A549 (cell line): ENCODE measurements at regions of chr10 and their contacts with region 1.

Region 1: GRCh38 chr10:6202684-6203330 is at the start of gene PFKFB3:
- DNase-seq: peak; percentile 91 to 97
- ATAC-seq: peak; percentile 71 to 78
- H3K4me3 ChIP-seq: peak within 1 kb of the TSS; percentile 70
- H3K27ac ChIP-seq: peak within 1 kb of the TSS; percentile 85 to 97
- H3K4me1 ChIP-seq: peaks cover 10% of the 10 kb centered on the region; the same call in 2 of the 3 replicates
- CTCF ChIP-seq: peak; percentile 92
- EP300 ChIP-seq: peak in 1 of 2 experiments; percentile 41; a peak in 1 of 5 replicates
- POLR2A ChIP-seq: peak; percentile 100
- RAD21 ChIP-seq: peak; percentile 77 to 96
- polyA plus RNA-seq, gene PFKFB3: 139 and 151 TPM in 2 replicates

Region 2: GRCh38 chr10:6044751-6045313 is 158.0 kb before region 1 on chr10:
- CTCF ChIA-PET with region 1: no interaction called
- POLR2A ChIA-PET with region 1: no interaction called
- DNase-seq: no peak
- ATAC-seq: no peak
- H3K4me3 ChIP-seq: no peak overlapping the region
- H3K27ac ChIP-seq: no peak overlapping the region
- H3K4me1 ChIP-seq: no peaks in the 10 kb centered on the region
- CTCF ChIP-seq: no peak
- EP300 ChIP-seq: no peak
- POLR2A ChIP-seq: no peak
- RAD21 ChIP-seq: no peak

Region 3: DNA sequence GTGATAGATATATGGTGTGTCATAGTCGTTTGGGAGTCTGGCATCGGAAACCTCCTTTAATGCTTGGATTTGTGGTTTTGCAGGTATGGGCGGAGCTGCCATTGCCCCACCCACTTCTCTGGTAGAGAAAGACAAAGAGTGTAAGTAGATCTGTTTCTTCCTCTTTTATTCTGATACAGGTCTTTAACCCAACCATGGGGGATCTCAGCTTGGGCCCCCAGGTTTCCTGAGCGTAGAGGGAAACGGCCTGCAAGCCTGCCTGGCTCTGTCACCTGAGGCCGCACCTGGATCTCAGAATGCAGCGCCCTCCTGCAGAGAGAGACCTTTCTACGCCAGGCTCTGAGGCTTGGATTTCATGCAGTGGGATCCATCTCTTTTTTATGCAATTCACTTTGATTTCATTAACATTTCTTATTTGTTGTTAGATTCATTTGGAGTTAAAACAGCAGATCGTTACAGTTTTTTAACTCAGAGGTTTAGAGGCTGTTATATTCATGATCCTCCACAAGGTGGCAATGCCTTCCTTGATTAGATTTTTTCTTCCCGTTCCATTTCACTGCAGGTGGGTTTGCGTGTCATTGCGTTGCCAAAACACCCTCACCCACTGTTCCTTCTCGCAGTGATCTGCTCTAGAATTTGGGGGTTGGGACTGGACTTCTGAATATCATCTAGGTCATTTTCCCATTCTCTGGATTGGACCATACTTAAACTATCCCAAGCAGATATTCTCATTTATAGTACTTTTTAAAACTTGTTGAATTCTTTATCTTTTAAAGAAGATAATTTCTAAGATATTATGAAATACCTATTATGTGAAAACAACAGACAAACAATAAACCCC is 94.0 kb before region 1 on chr10:
- CTCF ChIA-PET with region 1: interaction called, 25 read pairs
- POLR2A ChIA-PET with region 1: no interaction called
- DNase-seq: peak; percentile 57 to 65
- ATAC-seq: peak in 1 of 2 experiments; percentile 58; a peak in 2 of 6 replicates
- H3K4me3 ChIP-seq: no peak overlapping the region
- H3K27ac ChIP-seq: peak overlapping the region in 1 of 2 experiments; percentile 36; a peak in 1 of 6 replicates
- H3K4me1 ChIP-seq: peaks cover 25% of the 10 kb centered on the region; the same call in 2 of the 3 replicates
- CTCF ChIP-seq: peak; percentile 86
- EP300 ChIP-seq: no peak
- POLR2A ChIP-seq: no peak
- RAD21 ChIP-seq: peak; percentile 82 to 84

Region 4: GRCh38 chr10:6163364-6164270 is 39.2 kb before region 1 on chr10:
- CTCF ChIA-PET with region 1: interaction called, 13 read pairs
- POLR2A ChIA-PET with region 1: interaction called, 25 read pairs
- DNase-seq: peak; percentile 80 to 89
- ATAC-seq: peak; percentile 97 to 99
- H3K4me3 ChIP-seq: peak overlapping the region; percentile 100
- H3K27ac ChIP-seq: peak overlapping the region; percentile 87 to 94
- H3K4me1 ChIP-seq: peaks cover 16% of the 10 kb centered on the region; the same call in 1 of the 3 replicates
- CTCF ChIP-seq: no peak
- EP300 ChIP-seq: no peak
- POLR2A ChIP-seq: peak; percentile 61
- RAD21 ChIP-seq: no peak

Region 5: DNA sequence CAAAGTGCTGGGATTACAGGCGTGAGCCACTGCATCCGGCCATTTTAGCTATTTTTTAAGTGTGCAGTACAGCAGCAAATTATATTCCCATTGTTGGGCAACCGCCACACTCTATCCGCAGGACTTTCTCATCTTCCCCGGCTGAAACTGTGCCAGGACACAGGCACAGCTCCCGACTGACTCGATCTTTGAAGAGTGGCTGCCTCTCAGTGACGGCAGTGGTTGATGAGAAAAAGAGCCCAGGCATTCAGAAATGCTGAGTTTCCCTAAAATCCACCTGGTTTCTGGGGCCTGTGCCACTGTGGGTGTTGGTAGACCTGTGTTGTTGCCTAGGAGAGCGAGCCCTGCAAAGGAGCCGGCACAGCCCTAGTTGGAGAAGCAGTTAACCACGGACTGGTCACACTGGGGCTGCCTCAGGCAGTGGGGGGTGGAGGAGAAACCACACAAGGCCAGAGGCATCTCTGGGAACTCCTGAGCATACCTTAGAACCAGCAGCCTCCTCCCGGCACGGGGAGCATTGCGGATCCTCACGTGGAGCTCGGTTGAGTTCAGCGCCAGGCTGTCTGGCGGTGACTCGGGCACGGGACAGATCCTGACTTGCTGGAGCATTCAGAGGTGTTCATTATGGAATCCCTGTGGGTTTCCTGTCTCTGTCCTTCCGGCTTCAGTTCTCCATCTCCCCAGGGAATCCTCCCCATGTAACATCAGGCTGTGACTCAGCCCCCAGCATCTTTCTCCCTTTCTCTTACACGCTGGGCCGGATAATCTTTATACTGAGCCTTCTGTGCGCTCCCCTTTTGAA is 16.1 kb after region 1 on chr10:
- CTCF ChIA-PET with region 1: interaction called, 66 read pairs
- POLR2A ChIA-PET with region 1: interaction called, 11 read pairs
- DNase-seq: no peak
- ATAC-seq: peak in 1 of 2 experiments; percentile 1; a peak in 2 of 6 replicates
- H3K4me3 ChIP-seq: no peak overlapping the region
- H3K27ac ChIP-seq: peak overlapping the region; percentile 61 to 82
- H3K4me1 ChIP-seq: peaks cover 100% of the 10 kb centered on the region
- CTCF ChIP-seq: no peak
- EP300 ChIP-seq: no peak
- POLR2A ChIP-seq: no peak
- RAD21 ChIP-seq: no peak

Region 6: GRCh38 chr10:6239213-6239991 is 36.6 kb after region 1 on chr10:
- CTCF ChIA-PET with region 1: interaction called, 21 read pairs
- POLR2A ChIA-PET with region 1: interaction called, 16 read pairs
- DNase-seq: peak; percentile 98
- ATAC-seq: peak; percentile 80 to 96
- H3K4me3 ChIP-seq: no peak overlapping the region
- H3K27ac ChIP-seq: peak overlapping the region; percentile 75 to 86
- H3K4me1 ChIP-seq: peaks cover 61% of the 10 kb centered on the region
- CTCF ChIP-seq: no peak
- EP300 ChIP-seq: peak; percentile 24 to 64; a peak in 2 of 5 replicates
- POLR2A ChIP-seq: no peak
- RAD21 ChIP-seq: peak in 1 of 2 experiments; percentile 53; a peak in 3 of 5 replicates

Region 7: DNA sequence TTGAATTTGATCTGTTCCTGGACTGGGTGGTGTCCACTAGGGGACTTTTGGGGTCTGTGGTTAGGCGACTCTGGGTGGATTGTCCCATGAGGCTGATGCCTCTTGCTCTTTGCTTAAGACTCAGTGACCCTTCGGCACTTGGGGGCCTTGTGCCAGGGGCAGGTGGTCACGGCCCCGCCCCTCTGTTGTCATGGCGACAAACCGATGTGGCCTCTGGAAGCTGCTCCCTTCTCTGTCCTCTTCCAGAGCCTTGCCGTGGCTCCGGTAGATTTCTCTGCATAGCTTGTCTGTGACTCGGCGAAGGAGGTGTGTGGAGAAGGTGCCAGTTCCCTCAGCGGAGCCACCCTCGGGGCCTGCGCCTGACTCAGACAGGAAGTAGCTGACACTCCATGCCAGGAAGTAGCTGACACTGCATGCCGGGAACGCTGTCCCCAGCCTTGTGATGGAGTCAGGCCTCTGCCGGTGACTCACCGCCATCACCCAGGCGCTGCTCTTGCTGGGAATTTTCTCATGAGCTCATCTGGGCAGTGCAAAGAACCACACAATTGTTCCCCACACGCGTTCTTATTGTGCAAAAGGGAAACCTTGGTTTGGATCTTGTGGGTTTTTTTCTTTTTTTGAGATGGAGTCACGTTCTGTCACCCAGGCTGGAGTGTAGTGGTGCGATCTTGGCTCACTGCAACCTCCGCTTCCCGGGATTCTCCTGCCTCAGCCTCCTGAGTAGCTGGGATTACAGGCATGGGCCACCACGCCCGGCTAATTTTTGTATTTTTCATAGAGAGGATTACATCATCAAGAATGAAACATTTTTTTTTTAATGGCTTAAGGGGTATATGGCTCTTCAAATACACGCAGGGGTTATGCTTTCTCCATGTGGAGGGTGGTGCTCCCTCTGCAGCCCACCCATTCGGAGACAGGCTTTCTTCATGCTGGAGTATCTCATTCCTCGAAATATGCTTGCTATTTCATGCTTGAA is 72.5 kb after region 1 on chr10:
- CTCF ChIA-PET with region 1: interaction called, 15 read pairs
- POLR2A ChIA-PET with region 1: interaction called, 34 read pairs
- DNase-seq: peak; percentile 96 to 99
- ATAC-seq: peak; percentile 86 to 93
- H3K4me3 ChIP-seq: peak overlapping the region; percentile 35
- H3K27ac ChIP-seq: peak overlapping the region; percentile 98 to 100
- H3K4me1 ChIP-seq: peaks cover 61% of the 10 kb centered on the region
- CTCF ChIP-seq: no peak
- EP300 ChIP-seq: peak; percentile 48 to 82; a peak in 3 of 5 replicates
- POLR2A ChIP-seq: peak; percentile 41; the same call in 1 of the 2 replicates
- RAD21 ChIP-seq: peak in 1 of 2 experiments; percentile 43; a peak in 3 of 5 replicates

Region 8: GRCh38 chr10:6409971-6410651 is 207.3 kb after region 1 on chr10:
- CTCF ChIA-PET with region 1: interaction called, 44 read pairs
- POLR2A ChIA-PET with region 1: interaction called, 16 read pairs
- DNase-seq: no peak
- ATAC-seq: peak in 1 of 2 experiments; percentile 40; a peak in 1 of 6 replicates
- H3K4me3 ChIP-seq: no peak overlapping the region
- H3K27ac ChIP-seq: no peak overlapping the region
- H3K4me1 ChIP-seq: peaks cover 7% of the 10 kb centered on the region
- CTCF ChIP-seq: no peak
- EP300 ChIP-seq: no peak
- POLR2A ChIP-seq: no peak
- RAD21 ChIP-seq: no peak